HEK293T (cell line): ENCODE measurements at regions of chr3 and their contacts with region 1.

Region 1: GRCh38 chr3:50611464-50612233 is at the start of gene CISH:
- DNase-seq: peak; percentile 87

Region 2: DNA sequence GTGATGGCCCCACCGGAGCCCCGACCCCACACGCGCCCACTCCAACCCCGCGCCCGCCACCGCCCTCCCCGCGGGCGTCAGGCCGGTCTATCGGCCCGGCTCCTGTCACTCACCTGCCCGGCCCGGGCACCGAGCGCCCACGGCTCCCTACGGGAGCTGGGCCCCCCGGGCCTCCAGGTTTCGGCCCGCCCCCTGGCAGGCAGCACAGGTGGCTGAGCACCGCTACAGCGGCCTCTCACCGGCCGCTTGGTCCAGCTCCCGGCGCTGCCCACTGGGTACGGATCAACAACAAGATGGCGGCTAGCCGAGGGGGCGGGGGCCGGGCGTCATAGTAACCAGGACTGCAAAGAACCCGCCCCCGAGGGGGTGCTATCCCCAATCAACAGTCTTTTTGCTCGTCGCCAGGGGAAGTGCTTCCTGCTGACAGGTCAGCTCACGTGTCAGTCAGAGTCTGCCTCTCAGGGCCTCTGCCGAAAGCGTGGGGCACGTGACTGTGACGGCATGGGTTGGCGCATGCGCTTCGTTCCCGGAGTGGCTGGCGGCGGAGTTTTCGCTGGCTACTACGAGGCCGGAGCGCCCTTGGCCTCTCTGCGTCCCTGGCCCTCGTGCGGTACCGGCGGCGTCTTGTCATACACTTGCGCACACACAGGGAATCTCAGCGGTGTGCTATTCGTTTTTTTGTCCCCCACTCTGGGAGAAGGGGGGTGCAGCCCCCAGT is 825.2 kb before region 1 on chr3 and contains the start of gene IP6K1:
- CTCF ChIA-PET with region 1: no interaction called
- POLR2A ChIA-PET with region 1: no interaction called
- DNase-seq: peak; percentile 100

Region 3: GRCh38 chr3:50450209-50450921 is 161.3 kb before region 1 on chr3:
- CTCF ChIA-PET with region 1: no interaction called
- POLR2A ChIA-PET with region 1: no interaction called
- DNase-seq: no peak

Region 4: DNA sequence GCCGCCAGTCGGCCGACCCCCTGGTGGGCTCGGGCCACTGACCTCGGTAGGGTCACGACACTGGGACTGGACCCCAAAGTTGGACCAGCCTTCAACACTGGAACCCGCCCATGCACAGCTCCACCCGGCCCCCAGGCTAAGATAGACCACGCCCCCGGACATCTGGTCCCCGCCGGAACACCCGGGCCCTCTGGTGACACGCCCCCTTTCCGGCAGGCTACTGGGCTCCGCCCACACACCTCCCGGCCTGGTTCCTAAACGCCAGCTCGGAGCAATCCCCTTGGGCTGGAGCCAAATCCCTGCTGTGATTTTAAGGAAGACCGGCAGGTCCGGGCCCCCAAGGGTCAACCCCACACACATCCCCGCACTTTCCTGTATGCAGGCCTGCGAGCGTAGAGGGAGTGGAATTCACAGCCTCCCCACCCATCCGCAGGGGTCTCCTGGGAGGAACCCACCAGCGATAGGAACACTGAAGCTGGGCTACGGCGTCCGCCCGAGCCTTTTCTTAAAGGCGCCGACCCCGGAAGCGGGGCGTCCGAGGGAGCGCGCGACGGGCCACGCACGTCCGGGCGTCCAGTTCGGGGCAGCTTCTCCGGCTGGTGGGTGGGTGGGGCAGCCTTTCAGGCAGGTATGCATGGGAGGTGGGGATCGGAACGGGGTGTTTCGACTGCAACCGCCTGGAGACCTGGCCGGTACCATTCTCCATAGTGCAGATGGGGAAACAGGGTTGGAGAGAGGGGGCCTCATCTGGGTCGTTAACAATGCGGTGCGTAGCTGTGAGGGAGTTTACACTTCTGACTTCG is 42.5 kb before region 1 on chr3 and contains the start of gene HEMK1:
- CTCF ChIA-PET with region 1: interaction called, 44 read pairs
- POLR2A ChIA-PET with region 1: interaction called, 26 read pairs
- DNase-seq: peak; percentile 99

Region 5: GRCh38 chr3:50652709-50653108 is 41.1 kb after region 1 on chr3:
- CTCF ChIA-PET with region 1: interaction called, 37 read pairs
- POLR2A ChIA-PET with region 1: interaction called, 12 read pairs
- DNase-seq: peak; percentile 31

Region 6: DNA sequence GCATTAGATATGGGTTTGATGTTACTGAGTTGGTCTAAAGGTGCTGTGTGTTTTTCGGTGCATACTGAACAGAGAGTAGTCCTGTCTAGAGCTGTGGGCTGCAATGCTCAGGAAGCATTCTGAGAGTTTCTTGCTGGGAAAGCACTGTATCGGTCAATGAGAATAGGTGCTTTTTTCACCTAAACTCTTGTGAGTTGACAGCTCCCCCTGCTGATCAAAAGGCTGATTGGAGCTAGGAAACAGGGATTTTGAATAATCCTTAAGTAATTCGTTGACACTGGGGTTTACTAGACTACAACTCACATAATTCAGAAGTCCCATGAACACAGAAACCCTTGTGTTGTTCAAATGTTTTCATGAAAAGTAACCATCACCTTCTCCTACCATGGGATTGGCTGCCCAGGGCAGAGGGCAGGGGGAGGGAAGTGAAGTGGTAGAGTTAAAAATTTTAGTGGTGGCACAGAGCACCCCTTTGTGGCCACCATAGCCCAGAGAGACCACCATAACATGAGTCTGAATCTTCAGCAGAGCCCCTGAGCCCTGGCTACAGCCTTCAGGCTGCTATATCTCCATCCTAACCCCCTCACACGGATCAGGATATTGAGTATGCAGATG is 760.4 kb after region 1 on chr3:
- CTCF ChIA-PET with region 1: interaction called, 10 read pairs
- POLR2A ChIA-PET with region 1: interaction called, 3 read pairs
- DNase-seq: peak; percentile 56